Posterior vena cava (tissue), 2 donors: ENCODE measurements at regions of chr2 and their contacts with region 1.

Region 1: DNA sequence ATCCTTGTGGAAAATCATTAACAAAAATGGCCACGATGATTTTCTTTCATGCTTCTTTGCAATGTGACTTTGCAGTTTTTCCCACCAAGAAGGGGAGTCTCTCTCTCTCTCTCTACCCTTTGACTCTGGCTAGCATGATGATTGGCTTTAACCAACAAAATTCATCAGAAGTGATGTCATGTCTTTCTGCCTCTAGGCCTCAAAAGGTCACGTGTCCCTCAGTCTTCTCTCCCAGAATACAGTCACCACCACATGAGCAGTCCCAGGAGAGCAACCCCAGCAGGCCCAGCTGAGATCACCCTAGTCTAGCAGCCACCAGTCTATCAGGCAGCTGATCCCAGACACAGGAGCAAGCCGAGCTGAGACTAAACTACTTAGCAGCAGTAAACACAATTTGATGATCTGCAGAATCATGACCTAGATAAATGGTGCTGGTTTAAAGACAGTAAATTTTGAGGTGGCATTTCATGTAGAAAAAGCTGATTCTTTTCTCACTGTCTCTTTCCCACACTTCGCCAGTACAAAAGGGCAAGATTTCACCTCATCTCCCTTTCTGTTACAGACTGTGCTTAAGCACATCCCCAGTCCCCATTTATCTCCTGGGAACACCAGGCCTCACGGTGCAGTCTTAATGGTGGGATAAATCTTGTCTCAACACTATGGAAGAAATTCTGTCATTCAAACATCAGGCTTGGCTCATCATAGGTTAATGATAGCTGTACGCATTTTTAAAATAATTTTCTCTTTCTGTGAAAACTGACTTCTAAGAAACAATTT is 132.7 kb downstream of the SCG2 start:
- DNase-seq: peak; percentile 89

Region 2: GRCh38 chr2:221680548-221680947 is 1788.9 kb before region 1 on chr2:
- intact Hi-C with region 1: no loop called
- DNase-seq: no peak

Region 3: DNA sequence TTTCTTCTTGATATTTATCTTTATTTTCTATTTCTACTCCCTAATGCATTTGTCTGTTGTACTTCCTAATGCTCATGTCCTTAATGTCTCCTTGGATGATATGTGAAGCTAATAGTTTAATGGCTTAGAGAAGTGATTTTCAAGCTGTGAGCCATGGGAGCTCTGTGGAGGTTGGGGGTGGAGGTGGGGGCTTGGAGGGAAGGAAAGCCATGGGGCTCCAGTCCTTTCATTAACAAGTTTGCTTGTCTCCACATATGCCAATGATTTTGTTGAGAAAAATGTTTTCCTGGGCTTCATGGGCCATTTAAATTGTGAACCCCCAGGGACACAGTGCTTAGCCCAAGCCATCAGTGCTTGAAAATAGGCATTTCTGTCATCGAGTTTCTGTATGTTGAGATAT is 131.4 kb before region 1 on chr2:
- intact Hi-C with region 1: no loop called
- DNase-seq: no peak

Region 4: GRCh38 chr2:223674998-223675609 is 205.6 kb after region 1 on chr2:
- intact Hi-C with region 1: loop called in 1 of 2 experiments (anchors 10 kb)
- DNase-seq: no peak